Astrocyte of the cerebellum (primary cell): ENCODE measurements at regions of chr3 and their contacts with region 1.

Region 1: GRCh38 chr3:164144824-164145223 is 933.5 kb downstream of the SI start:
- DNase-seq: no peak
- H3K4me3 ChIP-seq: no peak overlapping the region
- CTCF ChIP-seq: no peak

Region 2: GRCh38 chr3:164024786-164025185 is 120.0 kb before region 1 on chr3:
- in situ Hi-C with region 1: no loop called
- DNase-seq: no peak
- H3K4me3 ChIP-seq: no peak overlapping the region
- CTCF ChIP-seq: no peak

Region 3: DNA sequence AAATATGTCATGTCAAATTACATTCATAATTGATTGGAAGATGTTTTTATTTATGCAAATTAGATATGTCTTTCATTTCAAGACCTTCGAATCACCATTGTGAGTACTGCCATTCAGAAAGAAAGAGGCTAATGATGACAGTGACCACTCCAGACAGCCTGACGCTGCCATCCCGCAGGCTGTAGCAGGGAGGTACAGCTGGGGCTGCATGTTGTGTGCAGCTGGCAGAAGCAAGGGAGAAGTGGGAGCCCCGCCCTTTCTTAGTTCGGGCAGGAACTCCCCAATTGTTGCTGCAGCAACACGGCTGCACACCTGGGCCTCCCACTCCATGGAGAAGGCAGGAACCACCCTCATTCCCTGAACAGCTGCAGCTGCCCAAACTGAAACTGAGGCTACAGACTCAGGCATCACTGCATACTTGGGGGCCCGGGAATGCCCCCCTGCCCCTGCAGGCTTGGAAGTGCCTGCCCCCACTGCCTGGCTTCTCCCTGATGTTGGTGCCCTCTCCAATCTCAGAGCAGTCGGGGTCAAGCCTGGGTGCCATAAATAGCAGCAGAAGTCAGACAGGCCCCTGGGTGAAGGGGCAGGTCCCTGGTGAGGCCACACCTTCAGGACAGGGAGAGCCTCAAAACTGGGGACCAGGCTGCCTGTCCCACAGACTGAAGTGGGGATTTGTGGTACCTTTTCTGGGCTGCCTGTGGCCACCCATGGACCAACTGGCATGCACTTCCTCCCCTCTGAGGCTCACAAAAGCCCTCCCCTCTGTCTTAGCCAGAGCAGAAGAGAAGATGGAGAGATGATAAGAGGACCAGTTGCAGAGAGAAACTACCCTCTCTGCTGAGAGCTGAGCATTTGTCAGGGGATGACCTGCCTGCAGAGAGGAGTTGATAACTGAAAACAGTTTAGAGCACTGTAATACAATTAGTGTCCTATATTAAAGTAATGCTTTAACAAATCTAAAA is 31.2 kb before region 1 on chr3:
- in situ Hi-C with region 1: loop called (anchors 5 kb)
- DNase-seq: no peak
- H3K4me3 ChIP-seq: no peak overlapping the region
- CTCF ChIP-seq: no peak